CD4-positive, alpha-beta memory T cell (primary cell): ENCODE measurements at regions of chr5 and their contacts with region 1.

Region 1: GRCh38 chr5:82165740-82166530 is 112.2 kb downstream of the RPS23 start:
- DNase-seq: peak; percentile 34 to 54 (median 50)
- H3K4me3 ChIP-seq: no peak overlapping the region
- H3K4me3 Mint-ChIP-seq: no peak overlapping the region
- H3K27ac ChIP-seq: no peak overlapping the region
- H3K27ac Mint-ChIP-seq: peak overlapping the region in 2 of 7 donors; percentile 3 to 12
- H3K4me1 ChIP-seq: no peaks in the 10 kb centered on the region
- H3K4me1 Mint-ChIP-seq: peaks cover 0 to 5% (median under 1%) of the 10 kb centered on the region in 4 donors
- H3K27me3 ChIP-seq: no peaks in the 10 kb centered on the region
- H3K27me3 Mint-ChIP-seq: no peaks in the 10 kb centered on the region

Region 2: GRCh38 chr5:81506900-81507588 is 658.9 kb before region 1 on chr5:
- CTCF ChIA-PET with region 1: interaction called, 29 read pairs
- POLR2A ChIA-PET with region 1: no interaction called
- intact Hi-C with region 1: loop called (anchors 1 kb)
- DNase-seq: peak; percentile 36 to 52 (median 41)
- H3K4me3 ChIP-seq: no peak overlapping the region
- H3K4me3 Mint-ChIP-seq: no peak overlapping the region
- H3K27ac ChIP-seq: no peak overlapping the region
- H3K27ac Mint-ChIP-seq: no peak overlapping the region
- H3K4me1 ChIP-seq: no peaks in the 10 kb centered on the region
- H3K4me1 Mint-ChIP-seq: peaks cover 0 to 6% (median under 1%) of the 10 kb centered on the region in 4 donors
- H3K27me3 ChIP-seq: no peaks in the 10 kb centered on the region
- H3K27me3 Mint-ChIP-seq: no peaks in the 10 kb centered on the region

Region 3: GRCh38 chr5:81513982-81514381 is 652.0 kb before region 1 on chr5:
- CTCF ChIA-PET with region 1: interaction called, 29 read pairs
- POLR2A ChIA-PET with region 1: no interaction called
- intact Hi-C with region 1: loop called (anchors 1 kb)
- DNase-seq: peak in 4 of 5 donors; percentile 7 to 19 (median 12)
- H3K4me3 ChIP-seq: no peak overlapping the region
- H3K4me3 Mint-ChIP-seq: no peak overlapping the region
- H3K27ac ChIP-seq: no peak overlapping the region
- H3K27ac Mint-ChIP-seq: no peak overlapping the region
- H3K4me1 ChIP-seq: no peaks in the 10 kb centered on the region
- H3K4me1 Mint-ChIP-seq: peaks cover 0 to 3% (median under 1%) of the 10 kb centered on the region in 4 donors
- H3K27me3 ChIP-seq: no peaks in the 10 kb centered on the region
- H3K27me3 Mint-ChIP-seq: no peaks in the 10 kb centered on the region